ENCODE measurements at regions of chr15 and their contacts with region 1.

Region 1: DNA sequence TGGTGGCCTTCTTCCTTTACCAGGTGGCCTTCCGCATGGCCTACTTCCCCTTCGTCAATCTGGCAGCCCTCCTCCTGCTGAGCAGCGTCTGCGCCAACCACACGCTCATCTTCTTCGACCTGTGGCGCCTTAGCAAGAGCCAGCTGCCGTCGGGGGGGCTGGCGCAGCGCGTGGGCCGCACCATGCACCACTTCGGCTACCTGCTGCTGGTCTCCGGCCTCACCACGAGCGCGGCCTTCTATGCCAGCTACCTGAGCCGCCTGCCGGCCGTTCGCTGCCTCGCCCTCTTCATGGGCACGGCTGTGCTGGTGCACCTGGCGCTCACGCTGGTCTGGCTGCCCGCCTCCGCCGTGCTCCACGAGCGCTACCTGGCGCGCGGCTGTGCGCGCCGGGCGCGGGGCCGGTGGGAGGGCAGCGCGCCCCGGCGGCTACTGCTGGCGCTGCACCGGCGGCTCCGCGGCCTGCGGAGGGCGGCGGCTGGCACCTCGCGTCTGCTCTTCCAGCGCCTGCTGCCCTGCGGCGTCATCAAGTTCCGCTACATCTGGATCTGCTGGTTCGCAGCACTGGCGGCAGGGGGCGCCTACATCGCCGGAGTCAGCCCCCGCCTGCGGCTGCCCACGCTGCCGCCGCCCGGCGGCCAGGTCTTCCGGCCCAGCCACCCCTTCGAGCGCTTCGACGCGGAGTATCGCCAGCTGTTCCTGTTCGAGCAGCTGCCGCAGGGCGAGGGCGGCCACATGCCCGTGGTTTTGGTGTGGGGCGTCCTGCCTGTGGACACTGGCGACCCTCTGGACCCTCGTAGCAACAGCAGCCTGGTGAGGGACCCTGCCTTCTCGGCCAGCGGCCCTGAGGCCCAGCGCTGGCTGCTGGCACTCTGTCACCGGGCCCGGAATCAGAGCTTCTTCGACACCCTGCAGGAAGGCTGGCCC is 9.9 kb downstream of the DISP2 start:
- DNase-seq: peak; percentile 88
- ATAC-seq: peak; percentile 92
- H3K4me3 ChIP-seq: peak overlapping the region; percentile 37; the same call in 1 of the 2 replicates
- H3K27ac ChIP-seq: no peak overlapping the region
- H3K4me1 ChIP-seq: no peaks in the 10 kb centered on the region; the same call in 1 of the 2 replicates
- H3K27me3 ChIP-seq: no peaks in the 10 kb centered on the region
- CTCF ChIP-seq: peak; percentile 71

Region 2: GRCh38 chr15:39944726-39945125 is 423.2 kb before region 1 on chr15:
- CTCF ChIA-PET with region 1: no interaction called
- POLR2A ChIA-PET with region 1: no interaction called
- intact Hi-C with region 1: no loop called
- DNase-seq: no peak
- ATAC-seq: no peak
- H3K4me3 ChIP-seq: no peak overlapping the region
- H3K27ac ChIP-seq: no peak overlapping the region
- H3K4me1 ChIP-seq: peaks cover 32% of the 10 kb centered on the region
- H3K27me3 ChIP-seq: no peaks in the 10 kb centered on the region
- CTCF ChIP-seq: no peak

Region 3: GRCh38 chr15:40256638-40257235 is 111.2 kb before region 1 on chr15:
- CTCF ChIA-PET with region 1: no interaction called
- POLR2A ChIA-PET with region 1: no interaction called
- intact Hi-C with region 1: no loop called
- DNase-seq: no peak
- ATAC-seq: no peak
- H3K4me3 ChIP-seq: no peak overlapping the region
- H3K27ac ChIP-seq: no peak overlapping the region
- H3K4me1 ChIP-seq: peaks cover 18% of the 10 kb centered on the region; the same call in 1 of the 2 replicates
- H3K27me3 ChIP-seq: no peaks in the 10 kb centered on the region
- CTCF ChIP-seq: no peak

Region 4: DNA sequence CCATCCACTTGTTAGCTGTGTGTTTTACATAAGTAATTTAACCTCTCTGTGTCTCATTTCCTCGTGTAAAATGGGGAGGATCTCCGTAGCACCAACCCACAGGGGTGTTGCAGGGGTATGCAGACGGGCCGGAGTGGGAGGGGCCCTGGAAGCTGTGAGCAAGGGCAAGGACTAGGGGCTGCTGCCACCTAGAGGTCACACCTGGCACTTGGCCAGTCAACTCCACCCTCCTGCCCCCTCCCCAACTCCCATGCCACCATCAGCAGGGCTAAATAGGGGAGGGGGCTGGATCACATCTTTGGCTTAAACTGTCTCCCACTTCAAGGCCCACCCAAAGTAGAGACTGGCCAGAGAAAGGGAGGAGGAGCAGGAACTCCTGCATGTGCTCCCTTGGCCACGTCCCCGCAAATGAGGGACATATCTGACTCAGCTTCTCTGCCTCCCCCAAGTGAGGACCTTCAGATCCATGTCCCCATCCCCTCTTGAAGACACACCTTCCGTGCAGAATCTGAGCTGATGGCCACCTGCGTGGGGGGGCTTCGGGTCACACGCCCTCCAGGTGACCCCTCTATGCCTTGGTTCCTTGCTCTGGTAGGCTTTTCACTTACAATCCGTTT is 29.8 kb before region 1 on chr15:
- CTCF ChIA-PET with region 1: interaction called, 9 read pairs
- POLR2A ChIA-PET with region 1: no interaction called
- intact Hi-C with region 1: loop called (anchors 2 kb)
- DNase-seq: peak; percentile 73
- ATAC-seq: peak; percentile 3; the same call in 1 of the 2 replicates
- H3K4me3 ChIP-seq: peak overlapping the region; percentile 75
- H3K27ac ChIP-seq: peak overlapping the region; percentile 100
- H3K4me1 ChIP-seq: peaks cover 66% of the 10 kb centered on the region
- H3K27me3 ChIP-seq: no peaks in the 10 kb centered on the region
- CTCF ChIP-seq: peak; percentile 90

Region 5: DNA sequence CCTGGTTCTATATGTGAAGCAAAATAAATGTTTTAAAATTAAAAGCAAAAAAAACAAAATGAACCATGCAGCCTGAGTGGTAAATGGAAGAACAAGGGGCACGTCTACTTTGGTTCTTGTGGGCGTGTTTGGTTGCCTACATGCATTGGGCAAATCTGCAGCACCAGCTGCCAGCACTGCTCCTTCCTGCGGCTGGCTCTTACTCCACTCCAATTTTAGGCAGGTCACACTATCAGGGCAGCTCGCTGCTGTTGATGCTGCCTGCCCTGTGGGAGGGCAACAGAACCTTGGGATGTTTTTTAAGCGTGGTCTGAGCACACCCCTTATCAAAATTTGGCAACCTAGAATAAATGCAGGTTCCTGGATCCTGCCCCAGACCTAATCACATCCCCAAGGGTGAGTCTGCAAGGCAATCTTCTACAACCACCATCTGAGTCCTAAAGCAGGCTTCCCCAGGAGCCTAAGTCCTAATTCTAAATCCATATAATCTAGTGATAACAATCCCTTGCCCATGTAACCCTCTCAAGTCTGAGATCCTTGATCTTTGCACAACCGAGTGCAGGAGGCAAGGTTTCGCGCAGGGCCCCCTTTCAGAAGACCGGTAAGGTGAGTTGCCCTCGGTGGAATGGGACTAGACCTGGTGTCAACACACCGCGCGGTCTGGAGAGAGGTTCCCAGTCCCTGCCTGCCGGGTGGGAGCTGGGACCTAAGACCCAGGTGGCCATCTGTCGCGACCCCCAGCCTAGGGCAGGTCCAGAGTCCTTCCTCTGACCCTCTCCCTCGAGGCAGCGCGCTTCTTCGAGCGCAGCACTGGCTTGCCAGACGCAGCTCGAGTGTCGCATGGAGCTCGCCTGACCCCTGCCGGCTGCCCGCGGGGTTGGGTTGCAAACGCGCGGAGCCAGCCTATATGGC is 53.6 kb after region 1 on chr15:
- CTCF ChIA-PET with region 1: interaction called, 3 read pairs
- POLR2A ChIA-PET with region 1: no interaction called
- intact Hi-C with region 1: loop called (anchors 1 kb)
- DNase-seq: peak; percentile 82
- ATAC-seq: peak; percentile 84
- H3K4me3 ChIP-seq: peak overlapping the region; percentile 36; the same call in 1 of the 2 replicates
- H3K27ac ChIP-seq: peak overlapping the region; percentile 31
- H3K4me1 ChIP-seq: peaks cover 23% of the 10 kb centered on the region
- H3K27me3 ChIP-seq: no peaks in the 10 kb centered on the region
- CTCF ChIP-seq: peak; percentile 94

Region 6: GRCh38 chr15:40893733-40894688 is 526.1 kb after region 1 on chr15 and contains the start of gene VPS18:
- CTCF ChIA-PET with region 1: no interaction called
- POLR2A ChIA-PET with region 1: no interaction called
- intact Hi-C with region 1: no loop called
- DNase-seq: peak; percentile 99
- ATAC-seq: peak; percentile 92
- H3K4me3 ChIP-seq: peak within 1 kb of the TSS; percentile 87
- H3K27ac ChIP-seq: peak within 1 kb of the TSS; percentile 81
- H3K4me1 ChIP-seq: peaks cover 16% of the 10 kb centered on the region
- H3K27me3 ChIP-seq: no peaks in the 10 kb centered on the region
- CTCF ChIP-seq: peak; percentile 74
- total RNA-seq, gene VPS18: 37.6 and 39.5 TPM in 2 replicates